Lower lobe of right lung (tissue), 2 donors: ENCODE measurements at regions of chr3 and their contacts with region 1.

Region 1: DNA sequence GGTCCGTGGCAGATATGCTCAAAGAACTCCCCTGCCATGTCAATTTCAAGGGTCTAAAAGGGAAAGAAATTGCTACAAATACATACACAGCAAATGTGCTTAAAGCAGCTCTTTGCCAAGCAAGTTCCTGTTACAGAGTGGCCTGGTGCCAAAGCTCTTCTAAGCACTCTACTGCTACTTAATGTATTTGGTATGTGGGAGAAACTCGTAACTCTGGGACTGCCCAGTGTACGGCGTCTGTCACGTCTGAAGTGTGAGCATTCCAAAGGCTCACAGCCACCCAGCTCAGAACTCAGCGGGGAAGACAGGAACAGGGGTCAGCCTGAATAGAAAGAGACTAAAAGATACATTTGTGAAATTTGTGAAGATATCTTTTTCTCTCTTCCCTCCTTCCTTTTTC is 54.6 kb downstream of the RBMS3 start:
- DNase-seq: peak; percentile 75
- ATAC-seq: peak; percentile 98
- H3K4me3 ChIP-seq: peak overlapping the region; percentile 30
- H3K27ac ChIP-seq: peak overlapping the region; percentile 73
- H3K4me1 ChIP-seq: peaks cover 44% of the 10 kb centered on the region
- H3K27me3 ChIP-seq: no peaks in the 10 kb centered on the region
- CTCF ChIP-seq: no peak

Region 2: GRCh38 chr3:29280404-29281093 is 54.9 kb before region 1 on chr3 and contains the start of gene RBMS3:
- intact Hi-C with region 1: loop called (anchors 10 kb)
- DNase-seq: peak; percentile 85
- ATAC-seq: peak; percentile 96
- H3K4me3 ChIP-seq: peak within 1 kb of the TSS; percentile 64
- H3K27ac ChIP-seq: peak within 1 kb of the TSS; percentile 85
- H3K4me1 ChIP-seq: no peaks in the 10 kb centered on the region
- H3K27me3 ChIP-seq: no peaks in the 10 kb centered on the region
- CTCF ChIP-seq: peak; percentile 55
- total RNA-seq, gene RBMS3: 58.5 TPM

Region 3: DNA sequence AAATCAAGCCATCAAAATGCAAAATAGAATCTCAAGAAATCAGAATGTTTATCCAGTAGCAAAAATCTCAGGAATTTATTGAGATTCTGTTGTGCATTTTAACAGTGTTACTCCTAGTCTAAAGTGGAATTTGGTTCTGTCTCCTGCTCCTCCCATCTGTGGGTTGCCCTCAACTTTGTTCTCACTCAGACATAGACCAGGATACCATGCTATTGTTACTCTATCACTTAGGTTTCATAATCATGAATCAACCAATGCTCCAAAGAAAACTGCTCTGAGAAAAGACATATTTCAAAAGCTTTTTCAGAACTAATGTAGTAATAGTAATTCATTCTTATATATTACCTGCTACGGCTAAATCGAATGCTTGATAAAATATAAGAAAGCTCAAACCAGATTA is 220.2 kb after region 1 on chr3:
- intact Hi-C with region 1: no loop called
- DNase-seq: no peak
- ATAC-seq: no peak
- H3K4me3 ChIP-seq: no peak overlapping the region
- H3K27ac ChIP-seq: no peak overlapping the region
- H3K4me1 ChIP-seq: peaks cover 16% of the 10 kb centered on the region
- H3K27me3 ChIP-seq: no peaks in the 10 kb centered on the region
- CTCF ChIP-seq: no peak

Region 4: DNA sequence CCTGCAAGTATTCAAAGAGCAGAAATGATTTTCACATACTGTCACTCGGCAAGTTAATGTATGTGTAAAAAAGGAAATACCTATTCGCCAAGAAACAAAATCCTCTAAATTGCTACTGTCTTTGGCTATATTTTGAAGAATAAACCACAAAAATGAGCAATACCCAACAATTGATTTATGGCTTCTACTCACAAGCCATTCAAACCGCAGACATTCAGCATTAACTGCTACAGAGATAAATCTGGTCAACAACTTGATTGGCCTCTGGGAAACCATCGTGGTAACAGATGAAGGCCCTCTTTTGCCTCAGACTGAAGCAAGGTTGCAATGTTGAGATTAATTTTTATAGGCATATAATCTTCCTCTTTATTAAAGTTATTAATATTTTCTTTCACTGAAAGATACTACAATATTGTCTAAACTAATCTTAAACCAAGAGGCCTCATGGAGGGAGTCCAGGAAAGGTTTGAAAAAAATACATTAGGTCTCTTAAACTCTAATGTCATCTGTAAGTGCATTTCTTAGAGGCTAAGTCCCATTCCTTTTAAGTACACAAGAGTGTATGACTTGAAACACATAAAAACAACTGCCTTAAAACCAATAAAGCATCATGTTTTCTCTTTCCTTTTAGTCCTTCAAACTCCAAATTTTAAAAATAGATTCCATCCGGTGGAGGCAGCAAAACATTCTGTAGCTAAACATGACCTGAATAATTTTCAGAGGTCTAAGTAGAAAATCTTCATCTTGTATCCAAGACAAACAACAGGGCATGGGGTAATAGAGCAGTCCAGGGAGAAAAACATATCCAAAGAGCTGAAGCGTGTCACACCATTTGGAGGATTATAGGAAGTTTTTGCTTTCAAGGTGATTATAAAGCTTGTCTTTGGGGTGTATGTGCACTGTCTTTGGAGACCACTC is 1108.6 kb after region 1 on chr3:
- intact Hi-C with region 1: no loop called
- DNase-seq: no peak
- ATAC-seq: no peak
- H3K4me3 ChIP-seq: no peak overlapping the region
- H3K27ac ChIP-seq: no peak overlapping the region
- H3K4me1 ChIP-seq: peaks cover 5% of the 10 kb centered on the region
- H3K27me3 ChIP-seq: no peaks in the 10 kb centered on the region
- CTCF ChIP-seq: no peak